Endothelial cell of umbilical vein (primary cell): ENCODE measurements at regions of chr22 and their contacts with region 1.

Region 1: GRCh38 chr22:19730655-19731360 is 7.5 kb downstream of the GP1BB start:
- DNase-seq: peak; percentile 67
- H3K4me3 ChIP-seq: peak overlapping the region in 2 of 3 experiments; percentile 6 to 25
- H3K27ac ChIP-seq: no peak overlapping the region
- H3K4me1 ChIP-seq: peaks cover 3% of the 10 kb centered on the region
- H3K27me3 ChIP-seq: no peaks in the 10 kb centered on the region
- CTCF ChIP-seq: peak; percentile 94 to 98
- POLR2A ChIP-seq: no peak

Region 2: GRCh38 chr22:19661156-19661555 is 69.7 kb before region 1 on chr22:
- CTCF ChIA-PET with region 1: no interaction called
- POLR2A ChIA-PET with region 1: no interaction called
- dilution Hi-C with region 1: no loop called
- intact Hi-C with region 1: no loop called
- DNase-seq: no peak
- H3K4me3 ChIP-seq: no peak overlapping the region
- H3K27ac ChIP-seq: no peak overlapping the region
- H3K4me1 ChIP-seq: no peaks in the 10 kb centered on the region
- H3K27me3 ChIP-seq: peaks cover 0 to 5% of the 10 kb centered on the region in 2 experiments
- CTCF ChIP-seq: no peak
- POLR2A ChIP-seq: no peak

Region 3: GRCh38 chr22:19691721-19692341 is 39.0 kb before region 1 on chr22:
- CTCF ChIA-PET with region 1: no interaction called
- POLR2A ChIA-PET with region 1: no interaction called
- dilution Hi-C with region 1: no loop called
- intact Hi-C with region 1: no loop called
- DNase-seq: peak; percentile 35
- H3K4me3 ChIP-seq: no peak overlapping the region
- H3K27ac ChIP-seq: no peak overlapping the region
- H3K4me1 ChIP-seq: peaks cover 6% of the 10 kb centered on the region
- H3K27me3 ChIP-seq: peaks cover 0 to 1% of the 10 kb centered on the region in 2 experiments
- CTCF ChIP-seq: no peak
- POLR2A ChIP-seq: no peak

Region 4: DNA sequence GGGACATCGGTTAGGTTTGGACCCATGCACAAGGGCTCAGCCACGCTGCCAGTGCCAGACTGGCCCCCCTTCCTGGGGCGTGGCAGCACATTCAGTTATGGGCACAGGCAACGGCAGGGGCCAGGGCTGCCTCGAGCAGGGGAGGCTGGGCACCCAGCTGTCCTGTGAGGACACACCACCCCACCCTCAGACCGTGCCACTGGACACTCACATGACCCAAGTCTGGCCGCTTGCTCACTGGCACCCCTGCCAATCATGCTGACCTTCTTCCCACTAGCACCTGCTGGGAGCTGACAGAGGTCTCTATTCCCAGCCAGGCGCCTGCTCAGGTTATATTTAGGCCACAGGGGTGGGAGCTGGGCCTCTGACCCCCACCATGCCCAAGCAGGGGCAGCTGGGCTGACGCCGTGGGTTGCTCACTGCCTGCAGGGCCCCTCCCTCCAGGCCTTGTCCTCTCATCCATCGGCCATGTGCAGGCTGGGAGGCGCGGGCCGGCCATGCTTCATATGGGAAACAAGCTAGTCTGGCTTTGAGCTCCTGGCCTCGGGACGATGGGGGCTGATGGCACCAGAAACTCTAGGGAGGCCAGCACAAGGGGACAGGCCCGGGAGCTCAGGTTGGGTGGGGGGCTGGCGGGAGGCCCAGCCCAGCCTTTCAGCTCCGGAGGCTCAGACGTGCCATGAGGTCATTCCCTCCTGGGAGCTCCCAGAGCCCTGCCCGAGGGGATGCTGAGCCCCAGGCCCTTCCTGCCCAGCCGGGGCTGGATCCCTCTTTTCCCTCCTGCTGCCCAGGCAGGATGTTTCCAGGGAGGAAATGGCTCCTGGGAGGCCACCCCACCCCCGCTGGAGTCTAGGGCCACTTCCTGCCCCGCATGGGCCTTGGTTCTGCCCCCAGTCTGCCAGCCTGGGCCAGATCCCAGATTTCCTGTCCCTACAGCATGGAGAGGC is 14.6 kb after region 1 on chr22:
- CTCF ChIA-PET with region 1: interaction called, 32 read pairs
- POLR2A ChIA-PET with region 1: no interaction called
- dilution Hi-C with region 1: no loop called
- intact Hi-C with region 1: no loop called
- DNase-seq: no peak
- H3K4me3 ChIP-seq: no peak overlapping the region
- H3K27ac ChIP-seq: no peak overlapping the region
- H3K4me1 ChIP-seq: peaks cover 9% of the 10 kb centered on the region
- H3K27me3 ChIP-seq: no peaks in the 10 kb centered on the region
- CTCF ChIP-seq: no peak
- POLR2A ChIP-seq: no peak

Region 5: DNA sequence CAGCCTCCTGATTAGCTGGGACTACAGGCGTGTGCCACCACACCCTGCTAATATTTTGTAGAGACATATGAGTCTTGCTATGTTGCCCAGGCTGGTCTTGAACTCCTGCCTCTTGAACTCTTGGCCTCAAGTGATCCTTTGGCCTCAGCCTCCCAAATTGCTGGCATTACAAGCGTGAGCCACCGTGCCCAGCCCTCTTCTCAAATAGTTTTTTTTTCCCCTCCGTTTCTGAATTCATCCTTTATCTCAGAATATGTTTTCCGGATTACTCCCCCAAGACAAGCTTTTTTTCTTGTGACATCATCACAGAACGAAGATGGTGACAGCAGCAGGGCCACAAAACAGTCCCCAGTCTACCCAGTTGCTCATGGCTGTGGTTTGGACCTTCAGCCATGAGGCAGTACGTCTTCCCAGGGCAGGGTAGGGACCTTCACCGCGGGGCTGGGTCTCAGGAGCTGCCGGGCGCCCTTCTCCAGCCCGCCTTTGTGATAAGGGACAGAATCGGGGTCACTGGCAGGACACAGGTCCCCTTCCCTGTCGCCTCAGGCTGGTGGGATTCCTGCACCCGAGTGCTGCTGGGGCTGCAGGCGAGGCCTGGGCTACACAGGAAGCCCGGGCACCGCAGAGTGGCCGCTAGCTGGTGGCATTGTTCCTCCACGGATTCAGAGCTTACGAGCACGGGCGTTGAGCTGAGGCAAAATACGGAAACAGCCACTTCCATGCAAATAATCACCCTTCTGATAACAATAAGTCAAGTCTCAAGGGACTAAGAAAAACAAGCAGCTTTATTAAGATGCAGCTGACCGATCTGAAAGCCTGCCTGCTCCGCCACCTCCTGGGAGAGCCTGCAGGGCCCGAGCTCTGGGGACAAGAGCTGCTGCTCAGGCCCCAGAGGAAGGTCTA is 41.9 kb after region 1 on chr22:
- CTCF ChIA-PET with region 1: interaction called, 28 read pairs
- POLR2A ChIA-PET with region 1: no interaction called
- dilution Hi-C with region 1: no loop called
- intact Hi-C with region 1: loop called (anchors 1 kb)
- DNase-seq: peak; percentile 83
- H3K4me3 ChIP-seq: no peak overlapping the region
- H3K27ac ChIP-seq: no peak overlapping the region
- H3K4me1 ChIP-seq: peaks cover 12% of the 10 kb centered on the region
- H3K27me3 ChIP-seq: peaks cover 6 to 9% of the 10 kb centered on the region in 2 experiments
- CTCF ChIP-seq: peak; percentile 15 to 29
- POLR2A ChIP-seq: no peak

Region 6: DNA sequence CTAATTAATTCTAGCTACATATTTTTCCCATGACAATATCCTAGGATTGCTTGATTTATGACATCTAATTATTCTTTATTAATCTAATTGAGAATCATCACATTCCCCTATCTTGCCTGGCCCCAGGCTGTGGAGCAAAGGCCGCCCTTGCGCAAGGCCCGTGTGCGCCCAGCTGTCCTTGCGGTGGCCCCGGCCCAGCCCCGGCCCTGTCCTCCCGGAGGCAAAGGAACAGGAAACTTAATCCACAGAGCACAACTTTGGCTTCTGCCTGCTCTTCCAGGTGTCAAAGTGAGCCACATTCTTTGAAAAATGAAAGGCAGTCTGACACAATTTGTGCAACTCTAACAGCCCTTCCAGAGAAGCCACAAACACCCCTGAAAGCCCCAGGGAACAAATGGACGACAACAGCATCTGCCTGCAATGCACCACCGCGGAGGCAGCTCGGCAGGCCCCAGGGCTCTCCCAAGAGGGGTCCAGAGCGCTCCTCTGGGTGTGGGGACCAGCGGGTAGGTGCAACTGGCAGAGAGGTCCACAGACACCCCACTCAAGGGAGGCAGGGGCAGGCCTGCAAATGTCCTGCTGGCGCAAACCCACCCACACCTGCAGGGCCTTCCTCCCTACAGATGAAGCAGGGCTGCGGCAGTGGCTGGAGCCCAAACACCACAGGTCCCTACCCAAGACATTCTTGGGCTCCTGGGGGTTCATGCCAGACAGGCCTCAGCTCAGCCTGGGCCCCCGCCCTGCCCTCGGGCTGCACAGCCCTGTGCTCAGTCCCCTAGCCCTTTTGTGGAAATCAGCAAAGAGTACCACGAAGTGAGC is 93.6 kb after region 1 on chr22:
- CTCF ChIA-PET with region 1: no interaction called
- POLR2A ChIA-PET with region 1: no interaction called
- dilution Hi-C with region 1: no loop called
- intact Hi-C with region 1: no loop called
- DNase-seq: no peak
- H3K4me3 ChIP-seq: no peak overlapping the region
- H3K27ac ChIP-seq: no peak overlapping the region
- H3K4me1 ChIP-seq: no peaks in the 10 kb centered on the region
- H3K27me3 ChIP-seq: no peaks in the 10 kb centered on the region
- CTCF ChIP-seq: no peak
- POLR2A ChIP-seq: no peak

Region 7: DNA sequence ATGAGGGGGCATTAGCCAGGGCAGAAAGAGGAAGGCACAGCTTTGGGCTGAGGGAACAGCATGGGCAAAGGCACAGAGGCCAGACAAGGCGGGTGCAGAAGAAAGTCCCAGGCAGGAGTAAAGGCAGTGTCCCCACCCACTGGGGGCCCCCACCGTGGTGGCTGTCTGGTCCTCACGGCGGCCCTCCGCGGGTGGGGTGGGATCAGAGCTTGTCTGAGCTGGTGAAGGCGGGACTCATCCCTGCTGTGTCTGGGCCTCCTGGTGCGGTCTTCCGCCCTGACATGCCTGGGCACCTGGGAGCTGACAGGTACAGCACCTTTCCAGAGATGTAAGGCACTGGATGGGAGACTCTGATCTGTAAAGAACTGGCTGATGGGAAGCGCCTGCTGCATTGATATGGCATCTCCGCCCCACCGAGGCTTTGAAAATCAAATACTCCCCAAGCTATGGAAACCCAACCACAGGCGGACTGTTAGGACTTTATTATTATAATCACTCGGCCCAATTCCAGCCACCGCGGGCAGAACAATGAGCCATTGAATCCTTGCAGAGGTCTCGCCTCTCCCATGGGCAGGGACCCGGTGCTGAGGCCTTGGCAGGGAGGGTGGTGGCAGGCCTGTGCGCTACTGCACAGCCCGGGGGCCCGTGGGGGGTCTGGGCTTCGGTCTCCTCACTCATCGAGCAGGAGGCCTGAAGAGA is 138.1 kb after region 1 on chr22:
- CTCF ChIA-PET with region 1: interaction called, 21 read pairs
- POLR2A ChIA-PET with region 1: no interaction called
- dilution Hi-C with region 1: no loop called
- intact Hi-C with region 1: no loop called
- DNase-seq: no peak
- H3K4me3 ChIP-seq: no peak overlapping the region
- H3K27ac ChIP-seq: no peak overlapping the region
- H3K4me1 ChIP-seq: peaks cover under 1% of the 10 kb centered on the region
- H3K27me3 ChIP-seq: no peaks in the 10 kb centered on the region
- CTCF ChIP-seq: no peak
- POLR2A ChIP-seq: no peak

Region 8: GRCh38 chr22:19903031-19903430 is 172.2 kb after region 1 on chr22:
- CTCF ChIA-PET with region 1: interaction called, 51 read pairs
- POLR2A ChIA-PET with region 1: no interaction called
- dilution Hi-C with region 1: no loop called
- intact Hi-C with region 1: no loop called
- DNase-seq: no peak
- H3K4me3 ChIP-seq: no peak overlapping the region
- H3K27ac ChIP-seq: no peak overlapping the region
- H3K4me1 ChIP-seq: no peaks in the 10 kb centered on the region
- H3K27me3 ChIP-seq: no peaks in the 10 kb centered on the region
- CTCF ChIP-seq: no peak
- POLR2A ChIP-seq: no peak

Region 9: GRCh38 chr22:19948057-19948760 is 217.4 kb after region 1 on chr22:
- CTCF ChIA-PET with region 1: interaction called, 38 read pairs
- POLR2A ChIA-PET with region 1: no interaction called
- dilution Hi-C with region 1: no loop called
- intact Hi-C with region 1: loop called (anchors 1 kb)
- DNase-seq: no peak
- H3K4me3 ChIP-seq: no peak overlapping the region
- H3K27ac ChIP-seq: peak overlapping the region; percentile 86
- H3K4me1 ChIP-seq: peaks cover 46% of the 10 kb centered on the region
- H3K27me3 ChIP-seq: no peaks in the 10 kb centered on the region
- CTCF ChIP-seq: no peak
- POLR2A ChIP-seq: no peak